MCF 10A (cell line): ENCODE measurements at regions of chr16 and their contacts with region 1.

Region 1: DNA sequence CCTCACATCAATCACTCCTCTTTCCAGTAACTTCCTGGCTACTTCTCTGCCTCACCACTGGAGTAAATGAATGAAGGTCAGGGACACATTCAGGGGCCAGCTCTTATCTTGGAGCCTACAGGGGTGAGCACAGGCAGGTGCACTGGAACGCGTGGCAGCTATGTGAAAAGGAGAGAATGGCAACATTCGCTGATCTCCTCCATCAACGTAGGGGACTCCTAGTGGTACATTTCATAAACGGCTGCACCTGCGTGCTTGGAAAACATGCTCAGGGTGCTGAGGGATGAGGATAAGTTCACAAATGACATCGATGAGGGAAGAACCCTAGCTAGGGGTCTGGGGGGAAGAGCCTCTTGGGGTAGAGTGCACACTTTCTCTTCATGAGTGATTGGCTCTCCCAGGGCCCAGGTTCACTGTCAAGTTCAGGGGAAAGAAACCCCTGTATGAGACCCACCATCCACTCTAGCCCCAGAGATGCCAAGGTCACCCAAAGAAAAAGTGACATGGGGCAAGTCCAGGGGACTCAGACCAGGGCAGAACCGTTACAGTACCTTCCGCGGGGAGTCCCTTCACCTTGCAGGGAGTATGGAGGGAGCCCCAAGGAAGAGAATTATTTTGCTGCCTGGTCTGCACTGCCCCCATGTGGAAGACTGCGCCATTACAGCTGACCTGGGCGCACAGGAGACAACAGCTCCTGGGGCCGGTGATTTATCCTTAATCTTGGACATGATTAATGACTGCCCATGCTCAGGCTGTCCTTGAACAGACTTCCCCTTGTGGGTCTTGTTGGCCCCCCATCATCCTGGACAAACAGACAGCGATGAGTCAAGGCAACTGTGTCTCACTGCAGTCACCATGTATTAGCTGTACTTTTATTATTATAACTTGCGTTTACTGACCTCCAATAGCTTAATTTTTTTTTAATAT is 30.1 kb downstream of the VAC14 start:
- DNase-seq: peak; percentile 76
- H3K4me3 Mint-ChIP-seq: no peak overlapping the region
- H3K27ac Mint-ChIP-seq: no peak overlapping the region
- H3K4me1 Mint-ChIP-seq: peaks cover 12% of the 10 kb centered on the region
- H3K27me3 Mint-ChIP-seq: no peaks in the 10 kb centered on the region
- CTCF ChIP-seq: peak; percentile 96

Region 2: DNA sequence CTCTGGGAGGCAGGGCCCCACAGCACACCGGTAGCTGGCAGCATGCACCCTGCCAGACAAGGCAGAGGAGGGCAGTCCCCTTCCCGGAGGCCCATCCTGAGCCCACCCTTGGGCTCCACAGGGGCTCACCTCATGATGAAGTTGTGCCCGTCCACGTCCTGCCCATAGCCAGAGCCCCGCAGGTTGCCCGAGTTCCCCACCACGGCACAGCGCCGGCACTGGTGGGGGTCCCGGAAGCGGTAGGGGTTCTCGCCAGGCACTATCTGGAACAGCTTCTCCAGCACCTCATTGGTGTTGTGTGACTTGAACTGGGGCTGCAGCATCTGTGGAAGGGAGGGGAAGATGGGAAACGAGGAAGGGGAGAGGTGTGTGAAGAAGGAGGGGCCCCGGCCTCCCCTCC is 376.0 kb before region 1 on chr16:
- CTCF ChIA-PET with region 1: no interaction called
- POLR2A ChIA-PET with region 1: no interaction called
- intact Hi-C with region 1: no loop called
- DNase-seq: no peak
- H3K4me3 Mint-ChIP-seq: no peak overlapping the region
- H3K27ac Mint-ChIP-seq: no peak overlapping the region
- H3K4me1 Mint-ChIP-seq: peaks cover 14% of the 10 kb centered on the region
- H3K27me3 Mint-ChIP-seq: no peaks in the 10 kb centered on the region
- CTCF ChIP-seq: no peak

Region 3: GRCh38 chr16:70561623-70562022 is 209.3 kb before region 1 on chr16:
- CTCF ChIA-PET with region 1: interaction called, 12 read pairs
- POLR2A ChIA-PET with region 1: no interaction called
- intact Hi-C with region 1: no loop called
- DNase-seq: peak; percentile 88
- H3K4me3 Mint-ChIP-seq: no peak overlapping the region
- H3K27ac Mint-ChIP-seq: peak overlapping the region; percentile 20
- H3K4me1 Mint-ChIP-seq: peaks cover 5% of the 10 kb centered on the region
- H3K27me3 Mint-ChIP-seq: no peaks in the 10 kb centered on the region
- CTCF ChIP-seq: no peak

Region 4: GRCh38 chr16:70674221-70675014 is 96.5 kb before region 1 on chr16:
- CTCF ChIA-PET with region 1: interaction called, 121 read pairs
- POLR2A ChIA-PET with region 1: no interaction called
- intact Hi-C with region 1: no loop called
- DNase-seq: no peak
- H3K4me3 Mint-ChIP-seq: no peak overlapping the region
- H3K27ac Mint-ChIP-seq: peak overlapping the region; percentile 90
- H3K4me1 Mint-ChIP-seq: no peaks in the 10 kb centered on the region
- H3K27me3 Mint-ChIP-seq: no peaks in the 10 kb centered on the region
- CTCF ChIP-seq: no peak

Region 5: DNA sequence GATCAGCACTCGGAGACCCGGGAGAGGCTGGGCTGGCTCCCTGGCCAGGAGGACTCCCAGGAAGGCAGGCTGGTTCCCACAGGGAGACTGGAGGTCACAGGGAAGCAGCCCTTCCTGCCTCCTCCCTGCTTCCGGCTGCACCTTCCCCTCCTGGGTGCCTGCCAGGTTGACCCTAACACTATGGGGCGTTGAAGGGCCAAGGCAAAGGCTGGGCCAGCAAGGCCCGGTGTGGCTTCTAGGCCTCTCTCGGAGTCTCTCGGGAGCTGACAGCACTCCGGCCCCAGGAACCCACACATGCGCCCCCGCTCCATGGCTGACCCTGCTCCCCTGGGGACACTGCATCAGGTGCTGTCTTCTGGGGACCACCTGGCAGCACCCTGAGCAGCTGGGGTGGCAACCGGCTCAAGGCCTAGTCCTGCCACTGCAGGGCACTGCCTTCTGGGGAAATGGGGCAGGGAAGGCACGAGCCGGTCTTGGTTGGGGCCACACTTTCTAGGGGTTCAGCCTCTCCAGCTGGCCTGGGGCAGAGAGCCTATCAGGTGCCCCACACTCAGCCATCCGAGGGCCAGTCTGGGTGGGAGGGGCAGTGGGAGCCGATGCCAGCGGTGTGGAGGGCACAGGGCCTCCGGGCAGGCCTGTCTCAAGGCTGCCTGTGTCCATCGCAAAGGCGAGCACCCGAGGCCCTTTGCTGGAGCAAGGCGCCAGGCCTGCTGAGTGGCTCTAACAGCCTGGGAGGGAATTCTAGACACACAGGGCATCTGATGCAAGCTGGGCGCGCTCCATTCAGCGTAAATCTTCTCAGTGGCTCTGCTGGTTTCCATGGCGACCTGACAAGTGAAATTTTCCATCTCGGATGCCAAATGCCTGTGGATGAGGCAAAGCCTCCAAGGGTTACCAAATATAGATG is 79.4 kb before region 1 on chr16:
- CTCF ChIA-PET with region 1: interaction called, 69 read pairs
- POLR2A ChIA-PET with region 1: interaction called, 12 read pairs
- intact Hi-C with region 1: no loop called
- DNase-seq: no peak
- H3K4me3 Mint-ChIP-seq: no peak overlapping the region
- H3K27ac Mint-ChIP-seq: no peak overlapping the region
- H3K4me1 Mint-ChIP-seq: peaks cover 63% of the 10 kb centered on the region
- H3K27me3 Mint-ChIP-seq: no peaks in the 10 kb centered on the region
- CTCF ChIP-seq: no peak

Region 6: DNA sequence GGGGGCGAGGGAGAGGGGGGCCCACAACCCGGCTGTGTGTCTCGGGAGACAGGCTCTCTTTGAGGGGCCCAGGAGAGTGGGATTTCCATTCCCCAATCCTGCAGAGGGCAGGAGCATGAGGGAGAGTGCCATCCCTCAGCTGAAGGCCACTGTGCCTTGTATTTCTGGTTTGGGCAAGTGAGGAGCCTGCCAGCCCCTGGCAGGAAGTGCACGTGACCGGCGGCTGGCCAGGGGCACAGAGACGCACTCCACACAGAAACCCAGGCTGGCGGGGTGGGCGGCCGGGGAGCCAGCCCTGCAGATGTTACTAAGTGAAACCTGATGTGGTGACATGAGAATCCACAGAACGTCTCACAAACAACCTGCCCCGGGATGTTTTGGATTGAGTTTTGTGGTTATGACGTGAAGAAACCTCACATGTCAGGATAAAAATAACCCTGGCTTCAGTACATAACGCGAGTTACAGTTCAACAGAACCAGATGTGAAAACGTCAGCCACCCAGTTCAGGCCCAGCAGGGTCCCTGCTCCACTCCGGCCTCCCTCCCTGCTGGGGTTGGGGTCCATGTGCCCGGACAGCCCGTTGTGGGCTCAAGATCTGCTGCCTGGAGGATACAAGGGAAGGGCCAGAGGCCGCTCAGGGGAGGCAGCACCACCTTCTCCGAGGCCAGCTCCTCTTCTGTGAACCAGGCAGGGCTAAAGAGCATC is 33.4 kb before region 1 on chr16:
- CTCF ChIA-PET with region 1: interaction called, 11 read pairs
- POLR2A ChIA-PET with region 1: no interaction called
- intact Hi-C with region 1: no loop called
- DNase-seq: no peak
- H3K4me3 Mint-ChIP-seq: no peak overlapping the region
- H3K27ac Mint-ChIP-seq: no peak overlapping the region
- H3K4me1 Mint-ChIP-seq: no peaks in the 10 kb centered on the region
- H3K27me3 Mint-ChIP-seq: no peaks in the 10 kb centered on the region
- CTCF ChIP-seq: no peak

Region 7: GRCh38 chr16:70784692-70785555 is 14.0 kb after region 1 on chr16:
- CTCF ChIA-PET with region 1: interaction called, 13 read pairs
- POLR2A ChIA-PET with region 1: interaction called, 3 read pairs
- intact Hi-C with region 1: no loop called
- DNase-seq: no peak
- H3K4me3 Mint-ChIP-seq: no peak overlapping the region
- H3K27ac Mint-ChIP-seq: no peak overlapping the region
- H3K4me1 Mint-ChIP-seq: no peaks in the 10 kb centered on the region
- H3K27me3 Mint-ChIP-seq: no peaks in the 10 kb centered on the region
- CTCF ChIP-seq: no peak